ENCODE measurements at regions of chr1 and their contacts with region 1.

Region 1: DNA sequence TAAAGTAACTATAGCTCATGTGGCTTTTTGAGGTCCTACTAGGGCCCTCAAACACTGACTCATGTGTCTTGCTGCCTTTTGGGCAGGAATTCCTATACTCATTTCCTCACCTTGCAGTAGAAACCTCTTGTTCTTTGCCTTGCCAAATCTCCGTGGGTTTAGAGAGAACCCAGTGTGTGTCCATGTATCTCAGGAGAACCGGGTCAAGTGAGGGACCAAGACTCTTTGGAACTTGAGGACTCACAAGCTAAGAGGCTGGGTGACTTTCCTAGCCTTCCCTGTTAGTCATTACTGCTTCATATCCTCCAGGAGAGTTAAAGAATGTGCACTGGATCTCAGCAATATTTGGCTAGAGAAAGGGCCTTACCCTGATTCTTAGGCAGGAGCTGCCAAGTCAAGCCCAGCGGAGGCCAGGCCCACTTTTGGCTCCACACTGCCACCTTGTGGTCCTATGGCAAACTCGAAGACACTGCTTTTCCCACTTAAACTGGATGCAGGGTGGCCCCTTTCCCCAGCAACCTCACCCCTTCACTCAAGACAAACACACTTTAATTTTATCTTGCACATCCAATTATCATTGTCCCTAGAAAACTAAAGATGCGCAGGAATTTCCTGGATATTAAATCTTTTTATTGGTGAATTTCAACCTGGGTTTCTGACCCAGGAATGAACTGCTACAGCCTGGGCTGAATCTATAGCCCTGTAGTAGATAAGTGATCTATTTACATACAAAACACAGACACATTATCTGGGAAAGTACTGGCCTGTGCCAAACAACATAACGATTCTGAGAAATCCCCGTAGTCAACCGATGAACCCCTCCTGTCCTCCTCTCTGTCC is 10.6 kb downstream of the AVPR1B start:
- DNase-seq: peak; percentile 82 to 84
- H3K4me3 ChIP-seq: no peak overlapping the region
- H3K27ac ChIP-seq: no peak overlapping the region
- H3K4me1 ChIP-seq: no peaks in the 10 kb centered on the region
- H3K27me3 ChIP-seq: no peaks in the 10 kb centered on the region
- CTCF ChIP-seq: peak; percentile 80 to 96 (median 85)
- POLR2A ChIP-seq: no peak

Region 2: DNA sequence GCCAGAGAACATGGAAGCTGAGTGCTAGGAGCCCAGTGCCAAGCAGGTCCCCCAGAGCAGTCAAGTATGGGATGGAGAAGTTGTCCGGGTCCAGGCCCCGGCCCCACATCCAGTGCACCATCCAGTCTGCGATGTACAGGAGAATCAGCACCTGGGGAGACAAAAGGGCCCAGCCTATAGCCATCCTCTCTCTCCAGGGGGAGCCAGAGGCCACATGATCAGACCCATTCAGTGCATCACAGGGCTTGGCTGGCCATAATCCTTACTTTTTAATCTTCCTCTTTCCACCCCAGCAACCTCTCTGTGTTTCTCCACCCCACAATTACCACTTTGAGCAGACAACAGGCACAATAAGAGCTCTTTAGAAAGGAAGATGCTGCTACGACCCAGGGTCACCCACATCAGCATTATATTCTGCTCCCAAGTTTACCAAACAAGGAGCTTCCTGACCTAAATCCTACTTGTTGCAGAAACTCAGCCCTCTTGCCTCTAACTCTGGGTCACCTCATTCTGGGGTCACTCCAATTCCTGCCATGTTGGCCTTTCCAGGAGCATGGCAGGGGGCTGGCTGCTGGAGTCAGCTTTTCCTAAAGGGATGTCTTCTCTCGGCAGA is 314.9 kb before region 1 on chr1:
- intact Hi-C with region 1: loop called (anchors 10 kb)
- DNase-seq: peak; percentile 63 to 65
- H3K4me3 ChIP-seq: no peak overlapping the region
- H3K27ac ChIP-seq: no peak overlapping the region
- H3K4me1 ChIP-seq: no peaks in the 10 kb centered on the region
- H3K27me3 ChIP-seq: no peaks in the 10 kb centered on the region
- CTCF ChIP-seq: peak; percentile 62 to 84 (median 78)
- POLR2A ChIP-seq: no peak

Region 3: GRCh38 chr1:205919026-205919746 is 187.4 kb before region 1 on chr1:
- intact Hi-C with region 1: loop called (anchors 5 kb)
- DNase-seq: peak; percentile 69 to 75
- H3K4me3 ChIP-seq: no peak overlapping the region
- H3K27ac ChIP-seq: no peak overlapping the region
- H3K4me1 ChIP-seq: no peaks in the 10 kb centered on the region
- H3K27me3 ChIP-seq: no peaks in the 10 kb centered on the region
- CTCF ChIP-seq: peak; percentile 72 to 85 (median 82)
- POLR2A ChIP-seq: no peak

Region 4: DNA sequence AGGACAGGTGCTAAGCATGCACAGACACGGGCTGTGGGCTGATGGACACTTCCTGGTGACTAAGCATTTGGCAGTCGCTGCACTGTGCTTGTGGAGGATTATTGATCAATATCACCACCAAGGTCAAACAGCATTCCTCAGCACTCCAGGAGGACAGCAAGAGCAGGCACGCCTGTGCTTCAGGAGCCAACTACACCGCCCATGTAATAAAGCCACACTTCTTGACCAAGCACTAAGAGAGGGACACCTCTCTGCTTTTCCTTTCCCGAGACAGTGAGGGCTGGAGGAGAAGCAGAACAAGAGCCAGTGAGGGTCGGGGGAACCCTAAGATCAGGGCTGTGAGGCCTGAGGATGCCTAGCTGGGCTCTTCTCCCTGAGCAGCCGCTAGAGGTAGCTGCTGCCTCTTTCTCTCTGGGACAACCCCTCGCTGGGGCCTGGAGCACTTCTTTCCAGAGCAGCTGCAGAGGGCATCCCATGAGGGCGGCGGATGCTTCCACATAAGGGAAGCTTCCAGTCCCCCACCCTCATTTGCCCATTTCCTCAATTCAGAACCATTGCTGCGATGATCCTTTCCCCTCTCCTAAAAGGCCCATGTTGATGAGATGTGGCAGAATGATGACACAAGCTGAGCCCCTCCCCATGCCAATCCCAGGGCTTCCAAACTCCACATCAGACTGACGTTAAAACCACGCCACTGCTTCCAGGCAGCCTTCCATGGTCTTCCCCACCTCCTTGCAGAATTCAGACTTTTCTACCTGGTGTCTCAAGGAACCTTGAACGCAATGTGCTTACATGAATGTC is 122.4 kb before region 1 on chr1:
- intact Hi-C with region 1: loop called (anchors 10 kb)
- DNase-seq: peak in 1 of 2 donors; percentile 52
- H3K4me3 ChIP-seq: no peak overlapping the region
- H3K27ac ChIP-seq: no peak overlapping the region
- H3K4me1 ChIP-seq: no peaks in the 10 kb centered on the region
- H3K27me3 ChIP-seq: no peaks in the 10 kb centered on the region
- CTCF ChIP-seq: peak; percentile 38 to 58 (median 48)
- POLR2A ChIP-seq: no peak

Region 5: DNA sequence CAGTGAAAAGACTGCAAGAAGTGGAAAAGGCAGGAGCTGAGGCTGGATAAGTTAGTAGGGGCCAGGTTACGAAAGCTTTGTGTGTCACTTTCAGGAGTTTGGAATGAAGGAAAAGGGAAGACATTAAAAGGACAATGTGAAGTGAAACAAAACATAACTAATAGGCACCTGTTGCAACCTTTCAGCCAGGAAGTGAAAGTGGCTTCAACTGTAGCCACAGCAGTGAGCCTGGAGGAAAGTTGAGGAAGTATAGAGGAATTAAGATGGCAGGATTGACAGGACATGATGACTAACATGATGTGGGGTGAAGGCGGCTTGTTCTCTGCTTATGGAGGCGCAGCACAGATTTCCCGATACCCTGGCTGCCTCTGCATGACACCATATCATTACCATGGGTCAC is 1066.3 kb after region 1 on chr1:
- intact Hi-C with region 1: no loop called
- DNase-seq: no peak
- H3K4me3 ChIP-seq: no peak overlapping the region
- H3K27ac ChIP-seq: no peak overlapping the region
- H3K4me1 ChIP-seq: no peaks in the 10 kb centered on the region
- H3K27me3 ChIP-seq: no peaks in the 10 kb centered on the region
- CTCF ChIP-seq: no peak
- POLR2A ChIP-seq: no peak

Measured in uterus (tissue), 4 donors.